HCT116 (cell line): ENCODE measurements at regions of chr5 and their contacts with region 1.

Region 1: GRCh38 chr5:141564216-141564692 is 54.5 kb downstream of the DIAPH1 start:
- DNase-seq: peak; percentile 95
- ATAC-seq: peak; percentile 88
- H3K4me3 ChIP-seq: no peak overlapping the region
- H3K27ac ChIP-seq: peak overlapping the region; percentile 76; the same call in 1 of the 2 replicates
- H3K4me1 ChIP-seq: peaks cover 0 to 14% of the 10 kb centered on the region in 2 experiments; a peak in 1 of 4 replicates
- H3K27me3 ChIP-seq: no peaks in the 10 kb centered on the region
- CTCF ChIP-seq: peak; percentile 76 to 99 (median 98)
- POLR2A ChIP-seq: no peak
- RAD21 ChIP-seq: peak; percentile 77

Region 2: GRCh38 chr5:140855772-140856674 is 708.2 kb before region 1 on chr5 and contains the start of gene PCDHA10:
- CTCF ChIA-PET with region 1: interaction called, 4 read pairs
- POLR2A ChIA-PET with region 1: no interaction called
- RAD21 ChIA-PET with region 1: no interaction called
- intact Hi-C with region 1: loop called (anchors 10 kb)
- DNase-seq: peak; percentile 42
- ATAC-seq: no peak
- H3K4me3 ChIP-seq: no peak within 1 kb of the TSS
- H3K27ac ChIP-seq: no peak within 1 kb of the TSS
- H3K4me1 ChIP-seq: no peaks in the 10 kb centered on the region
- H3K27me3 ChIP-seq: no peaks in the 10 kb centered on the region
- CTCF ChIP-seq: peak; percentile 29 to 52 (median 43); a peak in 3 of 6 replicates
- POLR2A ChIP-seq: no peak
- RAD21 ChIP-seq: peak; percentile 68
- total RNA-seq, gene PCDHA10: 0.05 TPM

Region 3: DNA sequence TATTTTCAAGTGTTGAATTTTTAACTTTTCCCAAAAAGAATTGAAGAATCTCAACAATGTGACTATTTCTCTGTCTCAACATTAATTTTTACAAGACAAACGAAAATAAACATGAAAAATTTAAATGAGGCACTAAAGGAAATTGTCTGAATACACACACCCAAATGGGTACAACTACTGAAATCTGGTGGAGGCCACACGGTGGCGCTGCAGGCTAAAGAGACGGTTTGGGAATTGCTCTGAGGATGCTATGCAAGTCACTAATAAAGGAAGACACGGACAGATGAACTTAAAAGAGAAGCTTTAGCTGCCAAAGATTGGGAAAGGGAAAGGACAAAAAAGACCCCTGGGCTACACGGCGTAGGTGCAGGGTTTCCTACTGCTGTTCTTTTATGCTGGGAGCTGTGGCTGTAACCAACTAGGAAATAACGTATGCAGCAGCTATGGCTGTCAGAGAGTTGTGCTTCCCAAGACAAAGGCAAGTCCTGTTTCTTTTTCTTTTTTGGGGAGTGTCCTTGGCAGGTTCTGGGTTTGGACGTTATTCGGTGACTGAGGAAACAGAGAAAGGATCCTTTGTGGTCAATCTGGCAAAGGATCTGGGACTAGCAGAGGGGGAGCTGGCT is 372.0 kb before region 1 on chr5 and contains the start of gene PCDHB10:
- CTCF ChIA-PET with region 1: interaction called, 10 read pairs
- POLR2A ChIA-PET with region 1: no interaction called
- RAD21 ChIA-PET with region 1: no interaction called
- intact Hi-C with region 1: loop called (anchors 2 kb)
- DNase-seq: peak; percentile 32
- ATAC-seq: peak; percentile 61; the same call in 1 of the 2 replicates
- H3K4me3 ChIP-seq: no peak within 1 kb of the TSS
- H3K27ac ChIP-seq: no peak within 1 kb of the TSS
- H3K4me1 ChIP-seq: no peaks in the 10 kb centered on the region
- H3K27me3 ChIP-seq: no peaks in the 10 kb centered on the region
- CTCF ChIP-seq: peak; percentile 46 to 85 (median 68); a peak in 5 of 6 replicates
- POLR2A ChIP-seq: no peak
- RAD21 ChIP-seq: peak; percentile 75
- total RNA-seq, gene PCDHB10: not detected

Region 4: DNA sequence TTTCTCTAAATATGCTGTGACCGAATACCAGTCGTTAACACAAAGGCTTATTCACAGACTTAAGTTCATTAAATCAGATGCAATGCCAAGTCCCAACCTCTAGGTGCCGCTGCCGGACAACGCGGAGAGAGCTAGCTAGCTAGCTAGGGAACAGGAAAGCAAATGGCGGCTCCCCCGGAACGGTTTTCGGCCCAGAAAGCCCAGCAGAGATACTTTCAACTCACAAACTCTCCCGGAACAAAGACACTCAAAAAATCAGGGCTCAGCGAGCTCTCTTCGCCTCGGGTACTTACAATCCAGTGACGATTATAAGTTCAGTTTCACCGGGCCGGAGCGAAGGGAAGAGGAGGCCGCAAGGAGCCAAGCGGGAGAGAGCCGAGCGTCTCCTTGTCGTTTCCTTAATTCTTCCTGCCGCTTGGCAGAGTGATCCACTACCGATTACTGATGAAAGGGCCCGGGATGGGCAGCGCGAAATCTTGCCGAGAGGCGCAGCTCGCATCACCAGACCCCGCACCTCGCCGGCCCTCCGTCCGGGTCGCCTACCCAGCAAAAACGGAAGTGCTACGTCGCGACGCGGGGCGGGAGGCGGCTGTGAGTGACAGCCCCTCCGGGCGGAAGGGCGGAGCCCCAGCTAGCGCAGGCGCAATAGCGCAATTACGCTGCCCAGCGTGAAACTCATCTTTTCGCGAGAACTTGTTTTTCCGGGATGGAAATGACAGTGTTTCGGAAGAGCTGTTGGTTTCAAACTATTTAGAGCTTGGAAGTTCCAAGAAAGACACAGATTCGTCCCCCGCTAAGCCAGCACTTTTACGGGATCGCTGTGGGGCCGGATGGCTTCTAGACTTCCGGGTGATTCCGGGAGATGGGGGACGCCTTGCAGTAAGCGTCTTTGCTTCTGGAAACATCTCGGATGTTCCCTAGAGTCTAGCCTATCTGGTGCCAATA is 243.8 kb before region 1 on chr5 and contains the start of gene TAF7:
- CTCF ChIA-PET with region 1: interaction called, 19 read pairs
- POLR2A ChIA-PET with region 1: interaction called, 5 read pairs
- RAD21 ChIA-PET with region 1: interaction called, 3 to 5 read pairs
- intact Hi-C with region 1: loop called (anchors 1 kb)
- DNase-seq: peak; percentile 89
- ATAC-seq: peak; percentile 91
- H3K4me3 ChIP-seq: peak within 1 kb of the TSS; percentile 70 to 74
- H3K27ac ChIP-seq: peak within 1 kb of the TSS; percentile 89
- H3K4me1 ChIP-seq: peaks cover 4 to 13% of the 10 kb centered on the region in 2 experiments; a peak in 3 of 4 replicates
- H3K27me3 ChIP-seq: no peaks in the 10 kb centered on the region
- CTCF ChIP-seq: peak; percentile 60 to 91 (median 84)
- POLR2A ChIP-seq: peak; percentile 94
- RAD21 ChIP-seq: peak; percentile 49
- total RNA-seq, gene TAF7: 40.9 TPM

Region 5: DNA sequence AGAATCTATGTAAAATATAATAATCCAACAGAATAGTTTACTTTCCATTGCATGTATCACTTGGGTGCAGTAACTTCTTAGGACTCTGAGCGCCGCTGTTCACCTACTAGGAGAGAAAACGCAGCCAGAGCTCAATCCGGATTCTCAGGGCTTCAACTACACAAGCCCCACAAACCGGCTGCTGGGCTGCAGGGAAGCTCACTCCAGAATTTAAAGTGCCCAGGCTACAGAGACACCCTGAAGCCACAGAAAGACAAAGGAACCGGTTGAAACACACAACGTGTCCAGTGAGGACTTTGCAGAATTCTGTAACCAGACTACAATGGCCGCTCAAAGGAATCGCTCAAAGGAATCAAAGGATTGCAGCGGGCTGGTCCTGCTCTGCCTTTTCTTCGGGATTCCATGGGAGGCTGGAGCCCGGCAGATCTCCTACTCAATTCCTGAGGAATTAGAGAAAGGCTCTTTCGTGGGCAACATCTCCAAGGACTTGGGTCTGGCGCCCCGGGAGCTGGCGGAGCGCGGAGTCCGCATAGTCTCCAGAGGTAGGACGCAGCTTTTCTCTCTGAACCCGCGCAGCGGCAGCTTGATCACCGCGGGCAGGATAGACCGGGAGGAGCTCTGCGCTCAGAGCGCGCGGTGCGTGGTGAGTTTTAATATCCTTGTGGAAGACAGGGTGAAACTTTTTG is 151.3 kb before region 1 on chr5 and contains the start of gene PCDHGA10:
- CTCF ChIA-PET with region 1: interaction called, 73 read pairs
- POLR2A ChIA-PET with region 1: interaction called, 9 read pairs
- RAD21 ChIA-PET with region 1: interaction called, 6 to 9 read pairs
- intact Hi-C with region 1: loop called (anchors 1 kb)
- DNase-seq: peak; percentile 71
- ATAC-seq: peak; percentile 89
- H3K4me3 ChIP-seq: peak within 1 kb of the TSS; percentile 46 to 61
- H3K27ac ChIP-seq: peak within 1 kb of the TSS; percentile 44
- H3K4me1 ChIP-seq: peaks cover 2 to 5% of the 10 kb centered on the region in 2 experiments; a peak in 1 of 4 replicates
- H3K27me3 ChIP-seq: no peaks in the 10 kb centered on the region
- CTCF ChIP-seq: peak; percentile 84 to 96 (median 86)
- POLR2A ChIP-seq: no peak
- RAD21 ChIP-seq: peak; percentile 94
- total RNA-seq, gene PCDHGA10: 3.8 TPM

Region 6: DNA sequence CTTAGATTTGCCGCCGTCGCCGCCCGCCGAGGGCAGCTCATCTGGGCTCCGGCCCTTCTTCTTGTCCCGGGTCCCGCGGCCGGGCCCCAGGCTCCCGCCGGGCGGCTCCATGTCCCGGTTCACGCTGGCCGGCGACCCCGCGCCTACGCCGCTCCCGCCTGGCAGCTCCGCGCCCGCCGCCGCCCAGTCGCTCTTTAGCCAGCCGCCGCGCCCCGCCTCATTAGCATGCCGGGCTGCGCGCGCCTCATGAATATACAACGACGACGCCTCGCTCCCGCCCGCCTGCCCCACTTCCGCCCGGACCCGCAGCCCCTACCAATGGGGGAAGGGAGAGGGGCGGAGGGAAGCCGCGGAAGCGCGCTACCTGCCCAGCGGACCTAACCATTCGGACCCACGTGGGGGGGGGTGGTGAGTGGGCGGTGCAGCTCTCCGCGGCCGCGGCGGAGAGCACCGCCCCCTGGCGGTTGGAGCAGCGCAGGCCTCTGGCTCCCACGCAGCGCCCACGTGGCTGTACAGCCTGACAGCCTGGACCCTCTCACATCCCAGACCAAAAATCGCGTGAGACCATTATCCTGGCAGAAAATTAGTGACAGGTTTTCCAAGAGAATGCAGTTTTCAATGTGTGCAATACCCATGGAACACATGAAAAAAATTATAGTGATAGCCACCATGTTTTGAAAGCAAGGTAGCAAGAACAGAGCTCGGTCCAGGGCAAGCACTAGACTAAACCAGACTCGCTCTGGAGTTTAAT is 54.7 kb after region 1 on chr5 and contains the start of gene DIAPH1:
- CTCF ChIA-PET with region 1: interaction called, 15 read pairs
- POLR2A ChIA-PET with region 1: no interaction called
- RAD21 ChIA-PET with region 1: no interaction called
- intact Hi-C with region 1: no loop called
- DNase-seq: peak; percentile 93
- ATAC-seq: peak; percentile 94
- H3K4me3 ChIP-seq: peak within 1 kb of the TSS; percentile 68 to 85
- H3K27ac ChIP-seq: peak within 1 kb of the TSS; percentile 87
- H3K4me1 ChIP-seq: peaks cover 6 to 25% of the 10 kb centered on the region in 2 experiments
- H3K27me3 ChIP-seq: no peaks in the 10 kb centered on the region
- CTCF ChIP-seq: peak; percentile 95 to 99 (median 96)
- POLR2A ChIP-seq: peak; percentile 64
- RAD21 ChIP-seq: peak; percentile 80
- total RNA-seq, gene DIAPH1: 142 TPM